ENCODE measurements at regions of chr18 and their contacts with region 1.

Region 1: GRCh38 chr18:44679056-44679905 is 1.4 kb upstream of the SETBP1 start:
- DNase-seq: peak; percentile 85 to 88
- ATAC-seq: peak; percentile 95 to 98 (median 97)
- H3K4me3 ChIP-seq: peak overlapping the region; percentile 49 to 98 (median 85)
- H3K27ac ChIP-seq: peak overlapping the region; percentile 96 to 99 (median 98)
- H3K4me1 ChIP-seq: peaks cover 4 to 40% (median 14%) of the 10 kb centered on the region in 9 donors
- H3K27me3 ChIP-seq: peaks cover 0 to 58% (median 0%) of the 10 kb centered on the region in 7 donors
- CTCF ChIP-seq: peak; percentile 42 to 90 (median 69)

Region 2: DNA sequence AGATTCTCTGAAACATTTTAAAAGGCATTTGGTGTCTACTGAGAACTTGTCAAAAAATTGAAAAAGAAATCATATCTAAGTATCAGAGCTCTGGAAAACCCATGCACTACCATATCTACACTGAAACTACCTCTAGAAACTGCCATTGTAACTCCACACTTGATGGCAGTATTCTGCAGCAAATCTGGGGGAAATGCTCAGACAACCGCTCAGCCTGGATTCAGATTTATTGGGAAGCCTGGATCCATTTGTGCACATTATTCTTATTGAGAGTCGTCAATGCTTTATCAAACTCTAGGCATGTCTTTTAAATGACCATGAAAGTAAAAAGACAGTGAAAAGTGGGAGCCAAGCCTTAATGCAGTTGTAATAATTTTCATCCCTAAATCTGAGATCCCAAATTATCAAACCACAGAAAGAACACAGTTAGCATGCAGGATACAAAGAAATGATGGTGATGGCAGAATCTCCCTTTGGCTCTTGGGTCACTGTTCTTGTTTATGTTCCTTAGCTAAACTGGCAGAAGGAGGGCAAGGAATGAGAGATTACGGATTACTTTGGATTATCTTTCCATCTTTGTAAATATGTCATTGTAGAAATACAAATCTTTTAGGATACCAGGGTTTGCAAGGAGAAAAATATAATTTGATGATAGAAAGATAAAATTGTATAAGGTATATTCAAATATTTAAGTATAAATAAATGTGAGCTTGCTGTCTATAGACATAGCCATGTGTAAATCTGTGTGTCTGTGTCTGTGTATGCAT is 889.9 kb before region 1 on chr18:
- intact Hi-C with region 1: loop called in 1 of 10 experiments (anchors 10 kb)
- DNase-seq: peak in 1 of 2 donors; percentile 7
- ATAC-seq: peak in 5 of 8 donors; percentile 42 to 77 (median 55)
- H3K4me3 ChIP-seq: no peak overlapping the region
- H3K27ac ChIP-seq: no peak overlapping the region
- H3K4me1 ChIP-seq: peaks cover 0 to 3% (median 0%) of the 10 kb centered on the region in 9 donors
- H3K27me3 ChIP-seq: no peaks in the 10 kb centered on the region
- CTCF ChIP-seq: peak in 7 of 9 donors; percentile 9 to 65 (median 47)

Region 3: GRCh38 chr18:44601447-44601846 is 77.8 kb before region 1 on chr18:
- intact Hi-C with region 1: no loop called
- DNase-seq: no peak
- ATAC-seq: no peak
- H3K4me3 ChIP-seq: no peak overlapping the region
- H3K27ac ChIP-seq: no peak overlapping the region
- H3K4me1 ChIP-seq: peaks cover 0 to 17% (median 6%) of the 10 kb centered on the region in 9 donors
- H3K27me3 ChIP-seq: no peaks in the 10 kb centered on the region
- CTCF ChIP-seq: no peak

Region 4: DNA sequence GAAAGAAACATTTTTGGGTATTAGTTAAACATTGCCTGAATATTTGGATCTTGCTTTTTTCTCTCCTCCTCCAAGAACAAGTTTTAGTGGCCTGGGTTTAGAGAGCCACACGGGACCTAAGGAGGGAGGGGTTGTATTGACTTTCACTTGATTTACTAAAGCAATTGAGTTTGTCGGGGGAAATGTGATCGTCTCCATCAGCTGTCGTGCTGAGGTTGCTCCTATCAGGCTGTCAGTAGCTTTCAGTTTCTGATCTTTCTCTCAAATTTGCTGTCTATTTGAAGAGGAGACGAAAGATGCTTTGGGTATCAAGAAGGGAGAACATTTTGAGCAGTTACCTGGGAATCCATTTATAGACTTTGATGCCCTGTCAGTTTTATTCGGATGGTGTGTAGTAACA is 107.4 kb after region 1 on chr18:
- intact Hi-C with region 1: loop called in 3 of 10 experiments (anchors 5 to 10 kb)
- DNase-seq: no peak
- ATAC-seq: no peak
- H3K4me3 ChIP-seq: peak overlapping the region in 1 of 10 donors; percentile 16
- H3K27ac ChIP-seq: no peak overlapping the region
- H3K4me1 ChIP-seq: peaks cover 8 to 70% (median 24%) of the 10 kb centered on the region in 9 donors
- H3K27me3 ChIP-seq: no peaks in the 10 kb centered on the region
- CTCF ChIP-seq: no peak

Region 5: GRCh38 chr18:44887227-44887631 is 207.9 kb after region 1 on chr18:
- intact Hi-C with region 1: loop called in 6 of 10 experiments (anchors 5 to 10 kb)
- DNase-seq: peak in 1 of 2 donors; percentile 32
- ATAC-seq: peak; percentile 60 to 97 (median 86)
- H3K4me3 ChIP-seq: no peak overlapping the region
- H3K27ac ChIP-seq: no peak overlapping the region
- H3K4me1 ChIP-seq: peaks cover 0 to 33% (median 12%) of the 10 kb centered on the region in 9 donors
- H3K27me3 ChIP-seq: peaks cover 0 to 22% (median 7%) of the 10 kb centered on the region in 7 donors
- CTCF ChIP-seq: peak in 2 of 9 donors; percentile 11

Region 6: DNA sequence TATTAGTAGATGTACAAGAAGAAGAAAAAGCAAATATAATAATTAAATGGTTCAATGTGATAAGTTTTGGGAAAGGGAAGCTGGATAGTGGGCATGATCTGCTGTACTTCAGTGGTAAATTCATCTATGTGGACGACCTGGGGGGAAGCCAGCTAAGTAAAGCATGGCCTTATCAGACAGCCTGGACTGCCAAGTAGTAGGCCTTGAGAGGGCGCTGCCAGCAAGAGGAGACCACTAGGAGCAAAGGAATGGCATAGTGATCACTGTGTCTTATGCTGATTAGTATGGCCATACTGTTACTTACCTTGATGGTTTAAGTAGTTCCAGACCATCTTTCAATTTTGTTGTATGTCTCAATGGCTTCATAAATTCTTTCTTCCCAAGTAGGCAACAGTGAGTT is 289.1 kb after region 1 on chr18:
- intact Hi-C with region 1: loop called in 2 of 10 experiments (anchors 5 to 10 kb)
- DNase-seq: no peak
- ATAC-seq: no peak
- H3K4me3 ChIP-seq: no peak overlapping the region
- H3K27ac ChIP-seq: no peak overlapping the region
- H3K4me1 ChIP-seq: peaks cover 0 to 19% (median 4%) of the 10 kb centered on the region in 9 donors
- H3K27me3 ChIP-seq: no peaks in the 10 kb centered on the region
- CTCF ChIP-seq: no peak

Region 7: GRCh38 chr18:45218436-45218835 is 539.2 kb after region 1 on chr18:
- intact Hi-C with region 1: loop called in 9 of 10 experiments (anchors 2 to 10 kb)
- DNase-seq: no peak
- ATAC-seq: no peak
- H3K4me3 ChIP-seq: no peak overlapping the region
- H3K27ac ChIP-seq: no peak overlapping the region
- H3K4me1 ChIP-seq: no peaks in the 10 kb centered on the region
- H3K27me3 ChIP-seq: peaks cover 0 to 6% (median 0%) of the 10 kb centered on the region in 7 donors
- CTCF ChIP-seq: no peak

Region 8: GRCh38 chr18:45657357-45658335 is 978.4 kb after region 1 on chr18:
- intact Hi-C with region 1: no loop called
- DNase-seq: no peak
- ATAC-seq: no peak
- H3K4me3 ChIP-seq: no peak overlapping the region
- H3K27ac ChIP-seq: no peak overlapping the region
- H3K4me1 ChIP-seq: peaks cover 0 to 8% (median 0%) of the 10 kb centered on the region in 9 donors
- H3K27me3 ChIP-seq: peaks cover 0 to 2% (median 0%) of the 10 kb centered on the region in 7 donors
- CTCF ChIP-seq: no peak